ENCODE measurements at regions of chr11 and their contacts with region 1.

Region 1: GRCh38 chr11:133134314-133135173 is 397.8 kb downstream of the OPCML start:
- DNase-seq: peak; percentile 50 to 66 (median 59)
- ATAC-seq: peak; percentile 83
- H3K4me3 ChIP-seq: no peak overlapping the region
- H3K27ac ChIP-seq: no peak overlapping the region
- H3K4me1 ChIP-seq: no peaks in the 10 kb centered on the region
- H3K27me3 ChIP-seq: no peaks in the 10 kb centered on the region
- CTCF ChIP-seq: peak; percentile 52 to 78 (median 58)
- EP300 ChIP-seq: no peak
- POLR2A ChIP-seq: no peak
- RAD21 ChIP-seq: peak; percentile 35 to 62; a peak in 3 of 4 replicates

Region 2: DNA sequence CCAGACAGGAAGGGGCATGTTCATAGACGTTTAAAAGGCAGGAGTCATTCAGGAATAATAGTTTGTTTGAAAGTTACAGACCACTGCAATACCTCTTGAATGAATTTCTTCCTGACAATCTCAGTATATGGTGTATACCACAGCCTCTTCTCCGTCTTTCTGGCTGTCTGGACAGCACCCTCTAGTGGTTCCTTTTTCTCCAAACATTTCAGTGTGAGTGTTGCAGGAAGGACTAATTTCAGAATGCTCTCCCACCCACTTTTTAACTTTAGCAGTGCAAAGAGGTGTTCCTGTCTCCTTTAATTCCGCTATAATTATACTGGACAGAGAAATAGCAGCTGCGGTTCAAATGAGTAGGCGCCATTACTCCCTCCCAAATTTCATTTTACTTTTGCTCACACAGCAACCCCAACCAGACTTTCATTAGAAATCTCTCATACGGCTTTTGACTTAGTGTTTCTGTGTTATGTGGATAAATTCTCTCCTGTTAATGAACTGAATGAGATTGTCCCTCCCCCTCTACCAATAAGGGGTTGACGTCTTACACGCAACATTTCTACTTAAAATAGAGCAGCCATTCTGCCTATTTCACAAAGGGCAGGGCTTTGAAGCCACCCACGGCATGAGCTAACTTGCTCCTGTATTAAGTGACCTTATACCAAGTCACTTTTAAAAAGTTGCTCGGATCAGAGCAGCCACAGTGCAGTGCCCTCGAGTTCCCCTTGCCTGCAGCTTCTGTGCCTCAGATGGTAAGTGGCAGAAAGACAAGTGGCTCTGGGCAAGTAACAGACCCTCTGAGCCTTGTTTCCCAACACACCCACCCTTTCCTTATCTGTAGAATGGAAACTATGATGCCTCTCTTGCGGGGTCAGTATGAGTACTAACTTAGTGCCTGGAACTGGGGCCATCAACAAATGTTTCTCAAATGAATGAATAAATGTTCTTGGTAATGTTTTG is 29.2 kb after region 1 on chr11:
- CTCF ChIA-PET with region 1: no interaction called
- POLR2A ChIA-PET with region 1: no interaction called
- in situ Hi-C with region 1: no loop called
- intact Hi-C with region 1: loop called (anchors 1 kb)
- DNase-seq: peak; percentile 16 to 42 (median 19)
- ATAC-seq: peak; percentile 79
- H3K4me3 ChIP-seq: no peak overlapping the region
- H3K27ac ChIP-seq: no peak overlapping the region
- H3K4me1 ChIP-seq: no peaks in the 10 kb centered on the region
- H3K27me3 ChIP-seq: no peaks in the 10 kb centered on the region
- CTCF ChIP-seq: peak; percentile 25 to 49 (median 43); a peak in 4 of 6 replicates
- EP300 ChIP-seq: no peak
- POLR2A ChIP-seq: no peak
- RAD21 ChIP-seq: peak in 1 of 2 experiments; percentile 34; a peak in 2 of 4 replicates

Region 3: DNA sequence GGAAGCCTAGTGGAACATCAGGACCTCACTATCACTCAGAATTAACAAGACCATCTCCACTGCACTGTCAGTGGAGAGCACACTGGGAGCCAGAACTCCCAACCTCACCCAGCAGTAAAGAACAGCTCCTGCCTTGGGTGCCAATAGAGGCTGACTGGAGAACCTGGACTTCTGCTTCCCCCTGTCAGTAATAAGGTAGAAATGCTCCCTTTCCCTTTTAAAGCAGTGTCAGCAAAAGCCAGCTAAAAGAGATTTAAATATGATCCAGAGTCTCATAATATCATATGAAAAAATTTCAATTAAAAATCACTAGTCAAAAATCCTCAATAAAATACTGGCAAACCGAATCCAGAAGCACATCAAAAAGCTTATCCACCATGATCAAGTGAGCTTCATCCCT is 628.0 kb after region 1 on chr11:
- CTCF ChIA-PET with region 1: no interaction called
- POLR2A ChIA-PET with region 1: no interaction called
- in situ Hi-C with region 1: no loop called
- intact Hi-C with region 1: no loop called
- DNase-seq: no peak
- ATAC-seq: no peak
- H3K4me3 ChIP-seq: no peak overlapping the region
- H3K27ac ChIP-seq: no peak overlapping the region
- H3K4me1 ChIP-seq: no peaks in the 10 kb centered on the region
- H3K27me3 ChIP-seq: no peaks in the 10 kb centered on the region
- CTCF ChIP-seq: no peak
- EP300 ChIP-seq: no peak
- POLR2A ChIP-seq: no peak
- RAD21 ChIP-seq: no peak

Region 4: DNA sequence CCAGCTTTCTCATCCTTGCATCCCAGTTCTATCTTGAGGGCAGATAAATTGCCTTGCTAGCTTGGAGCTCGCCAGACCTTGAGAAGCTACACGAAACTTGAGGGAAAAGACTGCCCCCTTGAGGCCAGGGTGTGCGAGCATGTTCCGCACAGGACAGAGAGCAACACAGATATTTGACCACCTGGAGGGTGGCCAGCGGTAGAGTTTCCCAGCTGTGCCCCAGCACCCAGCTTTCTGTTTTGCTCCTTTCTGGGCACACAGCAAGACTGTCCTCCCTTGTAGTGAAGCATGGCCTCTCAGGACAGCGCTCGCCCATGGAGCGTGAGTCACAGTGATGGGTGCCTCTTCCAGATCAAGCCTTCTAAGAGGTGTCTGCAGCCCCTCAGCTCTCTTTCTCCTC is 687.2 kb after region 1 on chr11:
- CTCF ChIA-PET with region 1: no interaction called
- POLR2A ChIA-PET with region 1: no interaction called
- in situ Hi-C with region 1: loop called (anchors 25 kb)
- intact Hi-C with region 1: loop called (anchors 2 kb)
- DNase-seq: peak; percentile 53 to 64 (median 55)
- ATAC-seq: peak; percentile 89
- H3K4me3 ChIP-seq: no peak overlapping the region
- H3K27ac ChIP-seq: no peak overlapping the region
- H3K4me1 ChIP-seq: no peaks in the 10 kb centered on the region
- H3K27me3 ChIP-seq: no peaks in the 10 kb centered on the region
- CTCF ChIP-seq: peak; percentile 54 to 63 (median 58)
- EP300 ChIP-seq: no peak
- POLR2A ChIP-seq: no peak
- RAD21 ChIP-seq: peak; percentile 28 to 57; a peak in 3 of 4 replicates

Region 5: GRCh38 chr11:133834682-133835592 is 700.4 kb after region 1 on chr11:
- CTCF ChIA-PET with region 1: no interaction called
- POLR2A ChIA-PET with region 1: no interaction called
- in situ Hi-C with region 1: loop called (anchors 25 kb)
- intact Hi-C with region 1: loop called (anchors 1 kb)
- DNase-seq: peak in 2 of 4 experiments; percentile 22 to 46
- ATAC-seq: peak; percentile 86
- H3K4me3 ChIP-seq: no peak overlapping the region
- H3K27ac ChIP-seq: no peak overlapping the region
- H3K4me1 ChIP-seq: no peaks in the 10 kb centered on the region
- H3K27me3 ChIP-seq: no peaks in the 10 kb centered on the region
- CTCF ChIP-seq: peak; percentile 39 to 55 (median 54)
- EP300 ChIP-seq: no peak
- POLR2A ChIP-seq: no peak
- RAD21 ChIP-seq: peak; percentile 26 to 63; a peak in 2 of 4 replicates